ENCODE measurements at regions of chr7 and their contacts with region 1.

Region 1: GRCh38 chr7:16420649-16421332 is 547 bp downstream of the CRPPA start:
- DNase-seq: peak; percentile 85
- ATAC-seq: peak; percentile 94
- H3K4me3 Mint-ChIP-seq: peak overlapping the region; percentile 90
- H3K27ac Mint-ChIP-seq: peak overlapping the region; percentile 97
- H3K4me1 Mint-ChIP-seq: peaks cover 15% of the 10 kb centered on the region
- H3K27me3 Mint-ChIP-seq: no peaks in the 10 kb centered on the region

Region 2: GRCh38 chr7:16431646-16432424 is 11.0 kb after region 1 on chr7:
- POLR2A ChIA-PET with region 1: interaction called, 11 read pairs
- DNase-seq: no peak
- ATAC-seq: peak; percentile 75
- H3K4me3 Mint-ChIP-seq: no peak overlapping the region
- H3K27ac Mint-ChIP-seq: no peak overlapping the region
- H3K4me1 Mint-ChIP-seq: peaks cover 6% of the 10 kb centered on the region
- H3K27me3 Mint-ChIP-seq: no peaks in the 10 kb centered on the region

Region 3: DNA sequence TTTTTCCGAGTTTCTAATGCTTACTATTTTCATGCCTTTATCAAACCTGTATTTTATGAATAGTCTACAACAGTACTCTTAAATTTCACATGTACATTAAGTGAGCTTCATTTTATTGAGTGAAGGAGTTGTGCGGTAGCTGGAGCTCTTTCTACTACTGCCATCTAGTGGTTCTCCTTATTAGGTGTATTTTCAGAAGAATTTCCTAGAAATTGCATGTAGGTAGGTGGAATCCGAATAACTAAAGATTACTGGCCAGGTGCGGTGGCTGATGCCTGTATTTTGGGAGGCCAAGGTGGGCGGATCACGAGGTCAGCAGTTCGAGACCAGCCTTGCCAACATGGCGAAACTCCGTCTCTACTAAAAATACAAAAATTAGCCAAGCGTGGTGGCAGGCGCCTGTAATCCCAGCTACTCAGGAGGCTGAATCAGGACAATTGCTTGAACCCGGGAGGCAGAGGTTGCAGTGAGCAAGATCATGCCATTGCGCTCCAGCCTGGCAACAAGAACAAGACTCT is 144.2 kb after region 1 on chr7:
- POLR2A ChIA-PET with region 1: interaction called, 14 read pairs
- DNase-seq: no peak
- ATAC-seq: peak; percentile 61
- H3K4me3 Mint-ChIP-seq: no peak overlapping the region
- H3K27ac Mint-ChIP-seq: no peak overlapping the region
- H3K4me1 Mint-ChIP-seq: peaks cover 11% of the 10 kb centered on the region
- H3K27me3 Mint-ChIP-seq: peaks cover 3% of the 10 kb centered on the region

Region 4: DNA sequence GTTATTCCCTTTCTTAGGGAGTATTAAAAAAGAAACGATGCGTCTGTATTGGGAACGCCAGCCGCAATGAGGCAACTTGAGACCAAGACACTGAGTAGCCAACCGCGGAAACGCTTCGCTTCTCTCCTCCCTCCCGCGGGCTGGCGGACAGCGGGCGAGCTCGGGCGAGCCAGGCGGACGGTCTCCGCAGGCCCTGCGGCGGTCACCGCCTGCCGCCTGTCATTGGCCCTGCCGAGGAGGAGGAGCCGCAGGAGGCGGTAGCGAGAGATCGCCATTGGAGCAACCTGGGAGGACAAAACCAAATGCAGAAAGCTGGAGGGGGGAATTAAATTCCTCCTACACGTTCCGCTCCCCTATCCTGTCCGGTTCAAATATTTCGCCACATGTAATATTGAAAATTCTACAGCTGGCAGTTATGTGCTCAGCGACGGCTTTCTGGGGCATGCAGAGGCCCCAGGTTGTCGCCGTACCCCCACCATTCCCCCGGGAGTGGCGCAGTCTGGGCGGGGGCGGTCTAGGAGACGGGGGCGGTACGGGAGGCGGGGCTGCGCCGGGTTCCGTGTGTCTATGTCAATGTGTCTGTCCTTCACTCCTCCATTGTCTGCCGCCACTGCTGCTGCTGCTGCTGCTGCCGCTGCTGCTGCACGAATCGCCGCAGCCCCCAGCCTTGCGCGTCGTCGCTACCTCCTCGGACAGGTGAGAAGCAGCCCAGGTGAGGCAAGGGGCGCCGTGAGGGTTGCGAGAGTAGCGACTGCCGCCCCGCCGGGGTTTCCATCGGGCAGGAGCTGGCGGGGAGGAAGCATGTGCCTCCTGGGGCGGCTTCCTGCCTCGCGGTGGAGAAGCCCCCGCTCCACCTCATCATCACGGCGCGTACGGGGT is 225.0 kb after region 1 on chr7 and contains the starts of genes ANKMY2 and BZW2:
- POLR2A ChIA-PET with region 1: interaction called, 23 read pairs
- DNase-seq: peak; percentile 91
- ATAC-seq: peak; percentile 92
- H3K4me3 Mint-ChIP-seq: peak within 1 kb of the TSS; percentile 100
- H3K27ac Mint-ChIP-seq: peak within 1 kb of the TSS; percentile 99
- H3K4me1 Mint-ChIP-seq: peaks cover 51% of the 10 kb centered on the region
- H3K27me3 Mint-ChIP-seq: no peaks in the 10 kb centered on the region
- total RNA-seq, gene ANKMY2: 14.3 to 18.7 TPM
- total RNA-seq, gene BZW2: 41.0 to 44.1 TPM

Region 5: DNA sequence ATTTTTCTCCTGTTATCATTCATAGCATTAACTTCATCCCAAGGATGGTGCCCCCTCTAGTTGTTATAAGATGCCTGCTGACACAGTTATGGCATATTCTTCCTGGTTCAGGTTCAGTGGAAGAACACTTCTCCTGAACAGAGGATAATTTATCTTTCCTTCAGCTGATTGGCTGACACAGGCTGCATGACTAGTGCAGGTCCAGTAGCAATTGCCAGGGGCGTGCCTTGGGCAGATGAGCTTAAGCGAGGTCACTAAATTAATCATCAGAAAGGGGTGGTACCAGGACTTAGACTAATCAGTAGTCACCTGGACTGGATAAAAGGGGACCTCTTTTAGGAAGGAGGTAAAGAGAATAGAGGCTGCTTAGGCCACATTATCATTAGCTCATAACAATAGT is 267.5 kb after region 1 on chr7:
- POLR2A ChIA-PET with region 1: no interaction called
- DNase-seq: no peak
- ATAC-seq: no peak
- H3K4me3 Mint-ChIP-seq: no peak overlapping the region
- H3K27ac Mint-ChIP-seq: no peak overlapping the region
- H3K4me1 Mint-ChIP-seq: peaks cover 11% of the 10 kb centered on the region
- H3K27me3 Mint-ChIP-seq: no peaks in the 10 kb centered on the region